ENCODE measurements at regions of chr7 and their contacts with region 1.

Region 1: DNA sequence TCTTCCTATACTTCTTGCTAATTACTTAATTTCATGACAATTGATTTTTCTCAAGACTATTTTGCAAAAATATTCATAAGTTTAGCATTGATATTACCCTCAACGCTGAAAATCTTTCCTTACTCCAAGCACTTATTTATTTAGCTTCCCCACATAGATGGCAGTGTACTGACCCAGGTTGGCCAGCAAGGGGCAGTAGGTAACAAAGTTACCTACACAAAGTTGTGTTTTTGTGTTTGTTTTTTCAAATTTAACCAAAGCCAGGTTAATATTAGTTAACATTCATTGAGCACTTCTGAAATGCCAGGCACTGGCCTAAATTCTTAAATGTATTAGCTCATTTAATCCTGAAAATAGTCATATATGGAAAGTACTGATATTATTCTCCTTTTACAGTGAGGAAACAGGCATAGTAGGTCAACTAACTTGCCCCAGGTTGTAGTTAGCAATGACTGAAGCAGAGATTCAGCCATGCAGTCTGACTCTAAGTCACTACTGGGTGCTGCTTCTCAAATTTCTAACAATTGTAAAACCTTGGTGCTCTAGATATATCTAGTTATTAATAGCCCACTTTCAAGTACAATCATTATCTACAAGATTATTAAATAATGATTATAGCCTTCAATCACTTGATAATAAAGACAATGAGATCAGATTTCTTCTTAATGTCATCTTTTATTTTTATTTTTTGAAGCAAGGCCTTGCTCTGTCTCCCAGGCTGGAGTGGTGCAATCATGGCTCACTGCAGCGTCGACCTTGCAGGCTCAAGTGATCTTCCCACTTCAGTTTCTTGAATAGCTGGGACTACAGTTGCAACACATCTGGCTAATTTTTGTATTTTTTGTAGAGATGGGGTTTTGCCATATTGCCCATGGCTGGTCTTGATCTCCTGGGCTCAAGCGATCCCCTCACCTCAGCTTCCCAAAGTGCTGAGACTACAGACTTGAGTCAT is 5.8 kb upstream of the GGCT start:
- DNase-seq: peak; percentile 33
- H3K4me3 ChIP-seq: no peak overlapping the region
- H3K27ac ChIP-seq: no peak overlapping the region
- H3K4me1 ChIP-seq: peaks cover 13% of the 10 kb centered on the region
- H3K27me3 ChIP-seq: no peaks in the 10 kb centered on the region
- CTCF ChIP-seq: peak; percentile 80 to 92

Region 2: DNA sequence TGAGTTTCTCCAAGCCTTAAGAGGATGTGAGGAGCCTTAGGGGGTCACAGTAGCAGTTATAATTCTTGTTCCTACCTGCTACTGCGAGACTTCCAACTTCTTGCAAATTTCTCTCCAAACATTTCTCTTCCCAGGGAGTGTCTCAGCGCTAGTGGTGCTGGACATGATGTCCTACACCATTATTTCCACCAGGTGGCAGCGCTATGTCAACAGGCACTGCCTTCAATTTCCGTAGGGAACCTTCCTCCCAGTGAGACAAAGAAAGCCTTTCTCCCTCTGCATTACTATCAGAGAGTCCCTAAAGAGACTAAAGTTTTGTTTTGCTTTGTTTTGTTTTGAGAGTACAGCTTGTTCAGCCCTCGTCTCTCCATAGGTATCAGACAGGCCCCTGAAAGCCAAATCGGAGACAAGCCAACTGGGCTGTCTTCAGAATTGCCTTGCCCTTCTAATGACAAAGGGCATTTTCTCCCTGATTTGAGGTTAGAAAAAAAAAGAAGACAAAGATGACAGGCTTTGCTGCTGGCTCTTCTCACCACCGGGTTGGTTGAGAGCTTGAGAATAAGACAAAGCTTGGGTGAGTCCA is 38.5 kb after region 1 on chr7:
- CTCF ChIA-PET with region 1: no interaction called
- dilution Hi-C with region 1: no loop called
- in situ Hi-C with region 1: no loop called
- intact Hi-C with region 1: loop called (anchors 1 kb)
- DNase-seq: peak; percentile 77
- H3K4me3 ChIP-seq: no peak overlapping the region
- H3K27ac ChIP-seq: peak overlapping the region; percentile 98
- H3K4me1 ChIP-seq: peaks cover 34% of the 10 kb centered on the region
- H3K27me3 ChIP-seq: no peaks in the 10 kb centered on the region
- CTCF ChIP-seq: peak; percentile 80 to 87

Region 3: DNA sequence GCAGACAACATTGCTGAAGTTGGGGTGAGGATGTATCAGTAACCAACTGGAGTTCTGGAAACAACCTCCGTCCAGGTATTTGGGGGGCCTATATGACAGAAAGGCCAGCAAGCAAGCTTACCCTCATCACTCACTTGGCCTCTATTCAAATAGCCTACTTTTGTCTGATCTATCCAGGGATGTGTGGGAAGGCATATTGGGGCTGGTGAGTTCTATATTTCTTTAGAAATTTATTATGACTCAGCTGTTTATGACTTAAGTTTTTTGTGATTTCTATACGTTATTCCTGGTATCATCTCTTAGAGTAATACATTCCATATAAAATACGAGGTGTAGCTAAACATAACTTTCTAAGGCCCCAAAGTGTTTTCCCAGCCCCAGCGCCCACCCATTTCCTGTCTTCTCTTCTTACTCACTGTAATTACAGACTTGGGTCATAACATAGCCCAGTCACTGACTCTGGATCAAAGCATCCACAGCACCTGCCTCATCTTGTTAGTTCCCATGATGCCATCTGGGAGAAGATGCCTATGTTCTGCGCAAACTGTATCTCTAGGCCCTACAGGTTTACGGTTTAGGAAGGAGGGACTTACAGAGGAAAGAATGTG is 102.4 kb after region 1 on chr7:
- CTCF ChIA-PET with region 1: no interaction called
- dilution Hi-C with region 1: no loop called
- in situ Hi-C with region 1: no loop called
- intact Hi-C with region 1: no loop called
- DNase-seq: peak; percentile 65
- H3K4me3 ChIP-seq: no peak overlapping the region
- H3K27ac ChIP-seq: peak overlapping the region; percentile 3
- H3K4me1 ChIP-seq: peaks cover 4% of the 10 kb centered on the region
- H3K27me3 ChIP-seq: no peaks in the 10 kb centered on the region
- CTCF ChIP-seq: no peak